ENCODE measurements at regions of chr13 and their contacts with region 1.

Region 1: GRCh38 chr13:98517576-98518310 is 59.2 kb downstream of the STK24 start:
- H3K4me3 Mint-ChIP-seq: no peak overlapping the region
- H3K27ac Mint-ChIP-seq: peak overlapping the region; percentile 72
- H3K4me1 Mint-ChIP-seq: peaks cover 78% of the 10 kb centered on the region
- H3K27me3 Mint-ChIP-seq: no peaks in the 10 kb centered on the region

Region 2: GRCh38 chr13:98549728-98550317 is 32.1 kb after region 1 on chr13:
- intact Hi-C with region 1: loop called (anchors 5 kb)
- H3K4me3 Mint-ChIP-seq: no peak overlapping the region
- H3K27ac Mint-ChIP-seq: peak overlapping the region; percentile 79
- H3K4me1 Mint-ChIP-seq: peaks cover 81% of the 10 kb centered on the region
- H3K27me3 Mint-ChIP-seq: no peaks in the 10 kb centered on the region

Measured in dendritic cell treated with granulocyte-macrophage colony-stimulating factor and Interleukin-4, amounts not matched to agents 40 ng/mL and 50 ng/mL, for 4 days (primary cell).